Breast epithelium (tissue), 4 donors: ENCODE measurements at regions of chr6 and their contacts with region 1.

Region 1: DNA sequence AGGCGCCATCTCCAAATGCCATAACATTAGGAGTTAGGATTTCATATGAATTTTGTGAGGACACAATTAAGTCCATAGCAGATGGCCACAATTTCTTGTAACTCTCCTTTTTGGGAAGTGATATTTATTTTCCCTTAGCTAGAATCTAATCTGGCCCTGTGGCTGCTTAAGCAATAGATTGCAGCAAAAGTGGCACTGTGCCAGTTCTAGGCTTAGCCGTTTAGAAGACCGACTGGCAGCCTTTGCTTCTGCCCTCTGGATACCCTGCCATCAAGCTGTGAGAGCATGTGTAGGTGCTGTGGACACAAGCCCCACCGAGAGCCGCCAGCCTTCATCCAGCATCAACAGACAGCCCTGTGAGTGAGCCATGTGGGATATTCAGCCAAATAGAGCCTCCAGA is 15.9 kb upstream of the ADGB start:
- DNase-seq: no peak
- H3K4me3 ChIP-seq: no peak overlapping the region
- H3K27ac ChIP-seq: no peak overlapping the region
- H3K4me1 ChIP-seq: no peaks in the 10 kb centered on the region
- H3K27me3 ChIP-seq: no peaks in the 10 kb centered on the region
- CTCF ChIP-seq: no peak
- POLR2A ChIP-seq: no peak

Region 2: GRCh38 chr6:145904868-145905267 is 678.0 kb before region 1 on chr6:
- intact Hi-C with region 1: loop called (anchors 5 kb)
- DNase-seq: no peak
- H3K4me3 ChIP-seq: no peak overlapping the region
- H3K27ac ChIP-seq: no peak overlapping the region
- H3K4me1 ChIP-seq: no peaks in the 10 kb centered on the region
- H3K27me3 ChIP-seq: no peaks in the 10 kb centered on the region
- CTCF ChIP-seq: no peak
- POLR2A ChIP-seq: no peak